CD4-positive, alpha-beta memory T cell (primary cell): ENCODE measurements at regions of chr9 and their contacts with region 1.

Region 1: GRCh38 chr9:73183917-73184861 is 32.5 kb downstream of the ANXA1 start:
- DNase-seq: peak in 4 of 5 donors; percentile 54 to 65 (median 60)
- H3K4me3 ChIP-seq: no peak overlapping the region
- H3K4me3 Mint-ChIP-seq: no peak overlapping the region
- H3K27ac ChIP-seq: no peak overlapping the region
- H3K27ac Mint-ChIP-seq: no peak overlapping the region
- H3K4me1 ChIP-seq: no peaks in the 10 kb centered on the region
- H3K4me1 Mint-ChIP-seq: peaks cover 0 to 4% (median under 1%) of the 10 kb centered on the region in 4 donors
- H3K27me3 ChIP-seq: no peaks in the 10 kb centered on the region
- H3K27me3 Mint-ChIP-seq: peaks cover 9 to 12% of the 10 kb centered on the region in 2 donors

Region 2: GRCh38 chr9:72856972-72857623 is 327.1 kb before region 1 on chr9:
- CTCF ChIA-PET with region 1: interaction called, 3 read pairs
- POLR2A ChIA-PET with region 1: no interaction called
- intact Hi-C with region 1: loop called (anchors 2 kb)
- DNase-seq: peak in 3 of 5 donors; percentile 7 to 15 (median 8)
- H3K4me3 ChIP-seq: no peak overlapping the region
- H3K4me3 Mint-ChIP-seq: no peak overlapping the region
- H3K27ac ChIP-seq: no peak overlapping the region
- H3K27ac Mint-ChIP-seq: no peak overlapping the region
- H3K4me1 ChIP-seq: no peaks in the 10 kb centered on the region
- H3K4me1 Mint-ChIP-seq: peaks cover 0 to 4% (median 0%) of the 10 kb centered on the region in 4 donors
- H3K27me3 ChIP-seq: no peaks in the 10 kb centered on the region
- H3K27me3 Mint-ChIP-seq: no peaks in the 10 kb centered on the region

Region 3: GRCh38 chr9:73081979-73082657 is 102.1 kb before region 1 on chr9:
- CTCF ChIA-PET with region 1: interaction called, 15 read pairs
- POLR2A ChIA-PET with region 1: no interaction called
- intact Hi-C with region 1: no loop called
- DNase-seq: peak in 3 of 5 donors; percentile 11 to 28 (median 13)
- H3K4me3 ChIP-seq: no peak overlapping the region
- H3K4me3 Mint-ChIP-seq: no peak overlapping the region
- H3K27ac ChIP-seq: no peak overlapping the region
- H3K27ac Mint-ChIP-seq: no peak overlapping the region
- H3K4me1 ChIP-seq: no peaks in the 10 kb centered on the region
- H3K4me1 Mint-ChIP-seq: no peaks in the 10 kb centered on the region
- H3K27me3 ChIP-seq: no peaks in the 10 kb centered on the region
- H3K27me3 Mint-ChIP-seq: peaks cover 10 to 21% of the 10 kb centered on the region in 2 donors

Region 4: DNA sequence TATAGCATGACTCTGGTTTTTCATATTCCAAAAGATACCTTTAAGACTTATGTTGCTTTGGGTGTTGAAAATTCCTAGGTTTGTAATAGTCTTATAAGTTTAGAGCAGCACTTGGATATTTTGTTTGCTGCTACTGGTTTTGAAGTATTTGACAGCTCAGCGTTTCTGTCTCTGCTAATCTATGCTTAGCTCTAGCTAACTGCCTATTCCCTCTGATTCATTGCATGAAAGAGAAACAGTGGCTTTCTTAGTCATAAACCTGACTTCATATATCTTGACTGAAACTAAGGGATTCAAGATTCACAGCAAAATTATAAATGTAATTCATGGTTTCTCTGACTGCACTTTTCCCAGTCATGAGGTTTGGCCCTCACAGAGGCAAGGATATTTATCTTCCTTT is 68.2 kb before region 1 on chr9:
- CTCF ChIA-PET with region 1: interaction called, 252 read pairs
- POLR2A ChIA-PET with region 1: no interaction called
- intact Hi-C with region 1: no loop called
- DNase-seq: no peak
- H3K4me3 ChIP-seq: no peak overlapping the region
- H3K4me3 Mint-ChIP-seq: peak overlapping the region in 1 of 8 donors; percentile 18
- H3K27ac ChIP-seq: no peak overlapping the region
- H3K27ac Mint-ChIP-seq: peak overlapping the region in 4 of 7 donors; percentile 55 to 72 (median 63)
- H3K4me1 ChIP-seq: peaks cover 35% of the 10 kb centered on the region
- H3K4me1 Mint-ChIP-seq: peaks cover 23 to 45% (median 33%) of the 10 kb centered on the region in 4 donors
- H3K27me3 ChIP-seq: no peaks in the 10 kb centered on the region
- H3K27me3 Mint-ChIP-seq: no peaks in the 10 kb centered on the region

Region 5: DNA sequence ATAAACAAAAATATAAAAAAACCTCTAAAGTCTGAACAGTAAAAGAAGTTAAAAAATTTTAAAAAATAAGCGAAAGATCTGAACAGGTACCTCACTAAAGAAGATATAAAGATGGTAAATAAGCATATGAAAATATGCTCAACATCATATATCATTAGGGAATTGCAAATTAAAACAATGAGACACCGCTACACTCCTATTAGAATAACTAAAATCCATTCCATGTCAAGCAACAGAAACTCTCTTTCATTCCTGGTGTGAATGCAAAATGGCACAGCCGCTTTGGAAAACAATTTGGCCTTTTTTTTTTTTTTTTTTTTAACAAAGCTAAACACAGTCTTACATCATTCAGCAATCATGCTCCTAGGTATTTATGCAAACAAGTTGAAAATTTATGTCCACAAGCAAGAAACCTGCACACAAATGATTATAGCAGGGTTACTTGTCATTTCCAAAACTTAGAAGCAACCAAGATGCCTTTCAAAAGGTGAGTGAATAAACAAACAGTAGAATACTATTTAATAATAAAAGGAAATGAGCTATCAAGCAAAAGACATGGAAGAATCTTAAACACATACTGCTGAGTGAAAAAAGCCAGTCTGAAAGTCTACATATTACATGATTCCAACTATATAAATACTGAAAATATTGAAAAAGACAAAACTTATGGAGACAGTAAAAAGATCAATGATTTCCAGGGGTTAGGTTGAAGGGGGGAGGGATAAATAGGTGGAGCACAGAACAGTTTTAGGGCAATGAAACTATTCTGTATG is 10.4 kb before region 1 on chr9:
- CTCF ChIA-PET with region 1: interaction called, 24 read pairs
- POLR2A ChIA-PET with region 1: interaction called, 3 read pairs
- intact Hi-C with region 1: no loop called
- DNase-seq: no peak
- H3K4me3 ChIP-seq: no peak overlapping the region
- H3K4me3 Mint-ChIP-seq: no peak overlapping the region
- H3K27ac ChIP-seq: no peak overlapping the region
- H3K27ac Mint-ChIP-seq: peak overlapping the region in 1 of 7 donors; percentile 14
- H3K4me1 ChIP-seq: no peaks in the 10 kb centered on the region
- H3K4me1 Mint-ChIP-seq: peaks cover 0 to 11% (median 2%) of the 10 kb centered on the region in 4 donors
- H3K27me3 ChIP-seq: no peaks in the 10 kb centered on the region
- H3K27me3 Mint-ChIP-seq: no peaks in the 10 kb centered on the region

Region 6: GRCh38 chr9:73371801-73372200 is 187.6 kb after region 1 on chr9:
- CTCF ChIA-PET with region 1: no interaction called
- POLR2A ChIA-PET with region 1: no interaction called
- intact Hi-C with region 1: no loop called
- DNase-seq: no peak
- H3K4me3 ChIP-seq: no peak overlapping the region
- H3K4me3 Mint-ChIP-seq: no peak overlapping the region
- H3K27ac ChIP-seq: no peak overlapping the region
- H3K27ac Mint-ChIP-seq: no peak overlapping the region
- H3K4me1 ChIP-seq: no peaks in the 10 kb centered on the region
- H3K4me1 Mint-ChIP-seq: no peaks in the 10 kb centered on the region
- H3K27me3 ChIP-seq: no peaks in the 10 kb centered on the region
- H3K27me3 Mint-ChIP-seq: no peaks in the 10 kb centered on the region